WTC11 (cell line): ENCODE measurements at regions of chr5 and their contacts with region 1.

Region 1: GRCh38 chr5:122195784-122196394 is 66.5 kb downstream of the ZNF474 start:
- DNase-seq: peak; percentile 21
- ATAC-seq: peak; percentile 82
- H3K4me3 Mint-ChIP-seq: no peak overlapping the region
- H3K27ac Mint-ChIP-seq: no peak overlapping the region
- H3K4me1 Mint-ChIP-seq: peaks cover 8% of the 10 kb centered on the region
- H3K27me3 Mint-ChIP-seq: no peaks in the 10 kb centered on the region
- CTCF ChIP-seq: peak; percentile 52

Region 2: GRCh38 chr5:122295138-122295537 is 99.2 kb after region 1 on chr5:
- CTCF ChIA-PET with region 1: interaction called, 12 read pairs
- POLR2A ChIA-PET with region 1: no interaction called
- DNase-seq: peak; percentile 36
- ATAC-seq: peak; percentile 89
- H3K4me3 Mint-ChIP-seq: no peak overlapping the region
- H3K27ac Mint-ChIP-seq: no peak overlapping the region
- H3K4me1 Mint-ChIP-seq: peaks cover 35% of the 10 kb centered on the region
- H3K27me3 Mint-ChIP-seq: no peaks in the 10 kb centered on the region
- CTCF ChIP-seq: 0 out of 2 replicates have a peak, but pooled peaks have one; percentile 35

Region 3: DNA sequence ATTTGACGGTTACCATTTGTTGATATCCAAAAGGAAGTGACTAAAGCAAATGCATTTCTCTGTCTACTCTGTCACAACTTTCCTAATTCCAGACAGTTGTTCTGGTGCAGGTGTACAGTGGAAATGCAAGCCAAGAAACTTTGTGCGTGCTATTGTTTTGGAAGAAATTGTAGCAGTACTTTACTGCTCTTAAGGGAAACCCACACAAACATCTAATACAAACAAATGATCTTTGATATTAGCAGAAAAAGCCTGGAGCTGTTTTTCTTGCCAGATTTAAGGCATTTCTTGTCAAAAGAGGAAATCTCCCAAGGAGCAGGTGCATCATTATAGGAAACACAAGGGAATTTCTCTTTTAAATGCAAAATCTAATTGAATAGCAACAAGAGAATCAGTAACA is 118.1 kb after region 1 on chr5:
- CTCF ChIA-PET with region 1: no interaction called
- POLR2A ChIA-PET with region 1: no interaction called
- DNase-seq: no peak
- ATAC-seq: no peak
- H3K4me3 Mint-ChIP-seq: peak overlapping the region; percentile 84; the same call in 1 of the 2 replicates
- H3K27ac Mint-ChIP-seq: no peak overlapping the region
- H3K4me1 Mint-ChIP-seq: peaks cover 29% of the 10 kb centered on the region
- H3K27me3 Mint-ChIP-seq: peaks cover 47% of the 10 kb centered on the region
- CTCF ChIP-seq: no peak

Region 4: GRCh38 chr5:122415030-122415800 is 219.3 kb after region 1 on chr5:
- CTCF ChIA-PET with region 1: interaction called, 17 read pairs
- POLR2A ChIA-PET with region 1: no interaction called
- DNase-seq: peak; percentile 71
- ATAC-seq: peak; percentile 99
- H3K4me3 Mint-ChIP-seq: no peak overlapping the region
- H3K27ac Mint-ChIP-seq: no peak overlapping the region
- H3K4me1 Mint-ChIP-seq: peaks cover 30% of the 10 kb centered on the region
- H3K27me3 Mint-ChIP-seq: no peaks in the 10 kb centered on the region
- CTCF ChIP-seq: peak; percentile 34; the same call in 1 of the 2 replicates

Region 5: GRCh38 chr5:122498163-122498562 is 302.3 kb after region 1 on chr5:
- CTCF ChIA-PET with region 1: interaction called, 26 read pairs
- POLR2A ChIA-PET with region 1: no interaction called
- DNase-seq: peak; percentile 63
- ATAC-seq: peak; percentile 78
- H3K4me3 Mint-ChIP-seq: no peak overlapping the region
- H3K27ac Mint-ChIP-seq: no peak overlapping the region
- H3K4me1 Mint-ChIP-seq: peaks cover 38% of the 10 kb centered on the region
- H3K27me3 Mint-ChIP-seq: no peaks in the 10 kb centered on the region
- CTCF ChIP-seq: no peak; the same call in 1 of the 2 replicates